Activated T-helper 2 cell treated with anti-CD3 and anti-CD28 coated beads, Interferon-gamma antibody, Interleukin-2, Interleukin-4, amounts not matched to agents 10 μg/mL and 5 μg/mL and 100 μg/mL, durations not matched to agents 14 hours and 24 hours and 36 hours (primary cell): ENCODE measurements at regions of chr11 and their contacts with region 1.

Region 1: DNA sequence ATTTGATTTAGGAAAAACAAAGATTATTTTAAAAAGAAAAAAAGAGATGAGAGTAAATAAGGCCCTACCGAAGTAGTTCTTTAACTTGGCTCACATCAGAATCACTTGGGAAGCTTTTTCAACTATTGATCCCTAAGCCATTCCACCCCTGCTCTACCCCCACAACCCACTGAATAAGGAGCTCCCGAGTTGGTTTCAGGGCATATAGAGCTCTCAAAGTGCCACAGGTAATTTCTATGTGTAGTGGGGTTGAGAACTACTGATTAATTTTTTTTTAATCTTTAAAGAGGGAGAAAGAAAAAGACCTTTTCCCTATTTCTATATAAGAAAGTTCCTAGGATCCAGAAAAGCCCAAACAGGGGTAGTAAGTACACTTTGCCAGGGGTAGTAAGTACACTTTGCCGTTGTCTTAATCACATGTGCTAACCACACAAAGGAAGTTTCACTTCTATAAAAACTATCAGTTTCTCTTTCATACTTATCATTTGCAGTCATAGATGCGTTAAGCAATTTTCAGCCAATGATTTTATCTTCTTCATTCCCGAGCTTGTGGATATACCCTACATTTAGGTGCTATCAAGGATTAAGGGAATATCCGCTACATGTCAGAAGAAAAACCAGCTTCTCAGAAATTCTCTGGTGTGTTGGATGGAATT is 108.4 kb upstream of the ZC3H12C start:
- DNase-seq: no peak
- H3K4me3 Mint-ChIP-seq: no peak overlapping the region
- H3K27ac Mint-ChIP-seq: peak overlapping the region; percentile 51
- H3K4me1 Mint-ChIP-seq: peaks cover 28% of the 10 kb centered on the region
- H3K27me3 Mint-ChIP-seq: peaks cover 15% of the 10 kb centered on the region

Region 2: DNA sequence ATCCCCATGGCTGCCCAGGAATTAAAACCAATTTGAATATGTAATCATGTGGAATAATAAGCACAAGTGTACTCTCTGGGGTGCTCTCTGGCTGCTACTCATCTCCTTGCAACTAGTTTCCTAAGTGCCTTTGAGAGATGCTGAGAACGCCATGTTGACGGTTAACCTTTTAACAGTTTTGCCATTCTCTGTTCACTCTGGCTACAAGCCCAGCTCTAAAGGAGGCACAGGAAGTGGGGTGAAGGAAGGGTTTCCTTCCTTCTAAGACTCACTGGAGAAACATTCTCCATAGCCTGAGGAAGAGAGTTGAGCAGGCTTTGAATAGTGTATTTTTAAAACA is 13.6 kb before region 1 on chr11:
- intact Hi-C with region 1: loop called (anchors 1 kb)
- DNase-seq: no peak
- H3K4me3 Mint-ChIP-seq: peak overlapping the region; percentile 11
- H3K27ac Mint-ChIP-seq: peak overlapping the region; percentile 89
- H3K4me1 Mint-ChIP-seq: peaks cover 60% of the 10 kb centered on the region
- H3K27me3 Mint-ChIP-seq: peaks cover 4% of the 10 kb centered on the region

Region 3: DNA sequence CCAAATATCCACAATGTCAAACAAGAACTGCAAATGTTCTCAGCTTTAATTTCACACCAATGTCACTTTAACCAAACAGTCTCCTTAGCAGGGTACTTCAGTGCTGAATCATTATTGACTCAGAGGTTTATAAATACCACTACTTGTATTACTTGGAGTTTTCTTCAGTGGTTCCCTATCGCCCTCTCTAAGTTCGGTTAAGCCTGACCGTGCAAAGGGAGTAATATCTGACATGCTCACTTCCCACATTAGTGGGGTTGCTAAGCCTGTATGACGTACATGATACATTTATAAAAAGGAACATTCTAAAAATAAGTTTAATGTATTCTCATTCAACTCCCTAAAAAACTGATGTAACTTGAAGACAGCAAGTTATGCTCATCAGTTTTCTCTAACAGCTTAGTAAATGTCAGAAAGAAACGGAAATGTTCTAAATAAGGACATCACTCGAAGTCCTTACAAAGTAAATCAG is 15.3 kb after region 1 on chr11:
- intact Hi-C with region 1: loop called (anchors 2 kb)
- DNase-seq: no peak
- H3K4me3 Mint-ChIP-seq: no peak overlapping the region
- H3K27ac Mint-ChIP-seq: no peak overlapping the region
- H3K4me1 Mint-ChIP-seq: no peaks in the 10 kb centered on the region
- H3K27me3 Mint-ChIP-seq: peaks cover 12% of the 10 kb centered on the region

Region 4: GRCh38 chr11:110044226-110044968 is 59.6 kb after region 1 on chr11:
- intact Hi-C with region 1: no loop called
- DNase-seq: no peak
- H3K4me3 Mint-ChIP-seq: no peak overlapping the region
- H3K27ac Mint-ChIP-seq: no peak overlapping the region
- H3K4me1 Mint-ChIP-seq: no peaks in the 10 kb centered on the region
- H3K27me3 Mint-ChIP-seq: peaks cover 21% of the 10 kb centered on the region

Region 5: GRCh38 chr11:110086892-110087309 is 102.1 kb after region 1 on chr11:
- intact Hi-C with region 1: loop called (anchors 1 kb)
- DNase-seq: no peak
- H3K4me3 Mint-ChIP-seq: no peak overlapping the region
- H3K27ac Mint-ChIP-seq: no peak overlapping the region
- H3K4me1 Mint-ChIP-seq: peaks cover 34% of the 10 kb centered on the region
- H3K27me3 Mint-ChIP-seq: peaks cover 11% of the 10 kb centered on the region